MCF 10A (cell line): ENCODE measurements at regions of chr19 and their contacts with region 1.

Region 1: DNA sequence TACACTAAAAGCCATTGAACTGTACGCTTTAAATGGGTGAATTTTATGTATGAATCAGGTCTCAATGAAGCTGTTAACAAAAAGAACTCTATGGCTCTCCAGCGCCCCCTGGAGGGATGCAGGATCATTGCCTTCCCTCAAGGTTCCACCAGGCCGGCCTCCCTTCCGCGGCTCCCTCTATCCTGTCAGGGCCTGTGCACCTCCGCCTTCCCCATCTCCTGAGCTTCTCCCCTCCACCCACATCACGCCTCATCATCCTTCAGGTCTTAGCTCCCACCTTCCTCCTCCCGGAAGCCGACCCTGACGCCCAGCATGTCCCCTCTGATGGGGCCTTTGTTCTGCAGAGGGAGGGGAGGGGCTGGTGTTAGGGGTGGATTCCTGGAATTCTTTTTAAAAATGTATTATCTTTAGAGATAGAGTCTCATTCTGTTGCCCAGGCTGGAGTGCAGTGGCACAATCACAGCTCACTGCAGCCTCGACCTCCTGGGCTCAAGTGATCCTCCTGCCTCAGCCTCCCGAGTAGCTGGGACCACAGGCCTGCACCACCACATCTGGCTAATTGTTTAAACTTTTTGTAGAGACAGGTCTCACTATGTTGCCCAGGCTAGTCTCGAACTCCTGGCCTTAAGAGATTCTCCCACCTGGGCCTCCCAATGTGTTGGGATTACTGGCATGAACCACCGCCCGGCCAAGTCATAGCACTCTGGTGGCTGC is 27.7 kb downstream of the MEIS3 start:
- DNase-seq: peak; percentile 82
- H3K4me3 Mint-ChIP-seq: no peak overlapping the region
- H3K27ac Mint-ChIP-seq: no peak overlapping the region
- H3K4me1 Mint-ChIP-seq: peaks cover 9% of the 10 kb centered on the region
- H3K27me3 Mint-ChIP-seq: peaks cover 17% of the 10 kb centered on the region
- CTCF ChIP-seq: peak; percentile 90

Region 2: GRCh38 chr19:47273313-47273977 is 118.2 kb before region 1 on chr19:
- CTCF ChIA-PET with region 1: interaction called, 10 read pairs
- POLR2A ChIA-PET with region 1: no interaction called
- intact Hi-C with region 1: no loop called
- DNase-seq: peak; percentile 89
- H3K4me3 Mint-ChIP-seq: peak overlapping the region; percentile 79
- H3K27ac Mint-ChIP-seq: peak overlapping the region; percentile 77
- H3K4me1 Mint-ChIP-seq: peaks cover 16% of the 10 kb centered on the region
- H3K27me3 Mint-ChIP-seq: no peaks in the 10 kb centered on the region
- CTCF ChIP-seq: no peak

Region 3: DNA sequence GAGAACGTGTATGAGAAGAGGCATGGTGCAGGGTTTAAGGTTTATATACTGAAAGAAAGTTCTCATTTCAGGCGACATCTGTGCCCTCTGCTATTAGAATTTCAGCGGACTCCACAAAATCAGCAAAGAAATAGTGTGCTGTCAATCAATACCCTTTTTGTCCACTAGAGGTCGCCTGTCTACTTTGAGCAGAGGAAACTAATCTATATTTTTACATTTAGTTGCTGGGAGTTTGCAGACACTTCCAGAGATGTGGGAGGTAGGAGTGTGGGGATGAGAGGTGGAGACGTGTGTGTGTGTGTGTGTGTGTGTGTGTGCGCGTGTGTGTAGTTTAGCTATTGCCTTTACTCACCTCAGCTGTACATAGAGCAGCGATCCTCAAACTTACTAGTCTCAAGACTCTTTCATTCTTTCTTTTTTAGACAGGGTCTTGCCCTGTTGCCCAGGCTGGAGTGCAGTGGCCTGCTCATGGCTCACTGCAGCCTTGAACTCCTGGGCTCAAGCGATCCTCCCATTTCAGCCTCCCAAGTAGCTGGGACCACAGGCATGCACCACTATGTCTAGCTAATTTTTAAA is 107.3 kb before region 1 on chr19:
- CTCF ChIA-PET with region 1: interaction called, 36 read pairs
- POLR2A ChIA-PET with region 1: interaction called, 7 read pairs
- intact Hi-C with region 1: loop called (anchors 2 kb)
- DNase-seq: peak; percentile 68
- H3K4me3 Mint-ChIP-seq: no peak overlapping the region
- H3K27ac Mint-ChIP-seq: no peak overlapping the region
- H3K4me1 Mint-ChIP-seq: peaks cover 22% of the 10 kb centered on the region
- H3K27me3 Mint-ChIP-seq: no peaks in the 10 kb centered on the region
- CTCF ChIP-seq: peak; percentile 66

Region 4: DNA sequence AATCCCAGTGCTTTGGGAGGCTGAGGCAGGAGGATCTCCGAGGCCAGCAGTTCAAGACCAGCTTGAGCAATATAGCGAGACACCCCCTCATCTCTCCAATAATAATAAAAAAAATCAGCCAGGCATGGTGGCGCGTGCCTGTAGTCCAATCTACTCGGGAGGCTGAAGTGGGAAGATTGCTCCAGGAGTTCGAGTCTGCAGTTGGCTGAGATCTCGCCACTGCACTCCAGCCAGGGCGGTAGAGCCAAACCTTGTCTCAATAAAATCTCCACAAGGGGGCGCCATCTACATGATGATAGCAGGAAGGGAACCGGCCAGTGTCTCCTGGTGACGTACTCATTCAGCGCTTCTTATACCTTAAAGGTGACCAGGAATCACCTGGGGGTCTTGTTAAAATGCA is 95.6 kb before region 1 on chr19:
- CTCF ChIA-PET with region 1: interaction called, 36 read pairs
- POLR2A ChIA-PET with region 1: interaction called, 4 read pairs
- intact Hi-C with region 1: loop called (anchors 1 kb)
- DNase-seq: peak; percentile 93
- H3K4me3 Mint-ChIP-seq: no peak overlapping the region
- H3K27ac Mint-ChIP-seq: no peak overlapping the region
- H3K4me1 Mint-ChIP-seq: no peaks in the 10 kb centered on the region
- H3K27me3 Mint-ChIP-seq: no peaks in the 10 kb centered on the region
- CTCF ChIP-seq: peak; percentile 71

Region 5: DNA sequence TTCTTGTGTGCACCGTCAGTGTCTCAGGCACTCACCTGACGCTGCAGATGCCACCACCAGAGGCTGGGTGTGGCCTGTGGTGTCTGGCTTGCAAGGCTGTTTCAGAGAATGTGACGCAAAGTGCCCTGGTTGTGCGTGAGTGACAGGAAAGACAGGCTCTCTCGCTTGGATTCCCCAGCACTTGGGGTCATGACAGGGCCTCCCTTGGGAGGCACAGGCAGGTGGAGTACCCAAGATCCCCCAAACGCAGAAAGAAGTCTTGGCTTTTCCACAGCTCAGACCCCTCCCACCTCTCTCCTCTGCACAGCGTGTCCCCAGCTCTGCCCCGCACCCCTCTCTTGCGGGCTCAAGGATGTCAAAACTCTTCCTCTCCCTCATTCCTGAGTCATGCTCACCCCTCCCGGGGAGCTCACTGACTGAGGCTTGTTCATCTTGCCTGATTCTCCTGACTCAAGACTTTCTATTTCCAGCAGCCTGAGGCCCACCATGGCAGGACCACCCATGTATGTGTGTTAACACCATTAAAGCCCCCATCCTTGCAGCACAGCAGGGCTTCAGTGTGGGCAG is 21.5 kb before region 1 on chr19:
- CTCF ChIA-PET with region 1: interaction called, 11 read pairs
- POLR2A ChIA-PET with region 1: no interaction called
- intact Hi-C with region 1: no loop called
- DNase-seq: peak; percentile 87
- H3K4me3 Mint-ChIP-seq: no peak overlapping the region
- H3K27ac Mint-ChIP-seq: no peak overlapping the region
- H3K4me1 Mint-ChIP-seq: peaks cover 14% of the 10 kb centered on the region
- H3K27me3 Mint-ChIP-seq: no peaks in the 10 kb centered on the region
- CTCF ChIP-seq: no peak

Region 6: GRCh38 chr19:47414469-47414868 is 22.8 kb after region 1 on chr19:
- CTCF ChIA-PET with region 1: interaction called, 18 read pairs
- POLR2A ChIA-PET with region 1: no interaction called
- intact Hi-C with region 1: no loop called
- DNase-seq: peak; percentile 57
- H3K4me3 Mint-ChIP-seq: no peak overlapping the region
- H3K27ac Mint-ChIP-seq: no peak overlapping the region
- H3K4me1 Mint-ChIP-seq: peaks cover 25% of the 10 kb centered on the region
- H3K27me3 Mint-ChIP-seq: peaks cover 37% of the 10 kb centered on the region
- CTCF ChIP-seq: no peak

Region 7: DNA sequence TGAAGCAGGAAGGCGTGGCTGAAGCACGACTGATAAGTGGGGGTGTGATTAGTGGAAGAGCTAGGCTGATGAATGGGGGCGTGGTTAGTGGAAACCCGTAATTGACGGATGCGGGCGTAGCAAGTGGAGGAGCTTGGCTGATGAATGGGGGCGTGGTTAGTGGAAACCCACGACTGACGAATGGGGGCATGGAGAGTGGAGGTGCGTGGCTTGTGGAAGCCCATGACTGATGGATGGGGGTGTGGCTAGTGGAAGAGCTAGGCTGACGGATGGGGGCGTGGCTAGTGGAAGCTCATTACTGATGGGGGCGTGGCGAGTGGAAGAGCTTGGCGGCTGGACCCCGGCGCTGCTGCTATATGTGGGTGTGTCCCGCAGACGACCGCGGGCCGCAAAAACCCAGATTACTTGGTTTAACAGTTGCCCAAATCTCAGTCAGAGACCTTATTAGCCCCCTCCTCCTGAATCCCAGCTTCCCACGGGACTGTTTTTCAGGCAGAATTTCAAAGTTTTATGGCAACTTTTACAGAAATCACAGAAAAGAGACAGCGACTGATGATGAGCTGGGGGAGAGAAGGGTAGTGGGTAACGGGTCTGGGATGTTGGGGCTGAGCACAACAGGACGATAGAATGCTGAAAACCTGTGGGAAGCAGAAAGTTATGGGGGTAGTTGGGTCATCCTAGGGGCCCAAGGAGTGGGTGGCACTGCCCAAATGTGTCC is 36.7 kb after region 1 on chr19:
- CTCF ChIA-PET with region 1: interaction called, 11 read pairs
- POLR2A ChIA-PET with region 1: interaction called, 3 read pairs
- intact Hi-C with region 1: no loop called
- DNase-seq: peak; percentile 98
- H3K4me3 Mint-ChIP-seq: no peak overlapping the region
- H3K27ac Mint-ChIP-seq: no peak overlapping the region
- H3K4me1 Mint-ChIP-seq: no peaks in the 10 kb centered on the region
- H3K27me3 Mint-ChIP-seq: peaks cover 7% of the 10 kb centered on the region
- CTCF ChIP-seq: no peak